Endothelial cell of umbilical vein (primary cell): ENCODE measurements at regions of chr6 and their contacts with region 1.

Region 1: GRCh38 chr6:133055441-133055966 is 185.7 kb upstream of the EYA4 start:
- DNase-seq: no peak
- H3K4me3 ChIP-seq: no peak overlapping the region
- H3K27ac ChIP-seq: no peak overlapping the region
- H3K4me1 ChIP-seq: no peaks in the 10 kb centered on the region
- H3K27me3 ChIP-seq: no peaks in the 10 kb centered on the region
- CTCF ChIP-seq: no peak
- POLR2A ChIP-seq: no peak

Region 2: DNA sequence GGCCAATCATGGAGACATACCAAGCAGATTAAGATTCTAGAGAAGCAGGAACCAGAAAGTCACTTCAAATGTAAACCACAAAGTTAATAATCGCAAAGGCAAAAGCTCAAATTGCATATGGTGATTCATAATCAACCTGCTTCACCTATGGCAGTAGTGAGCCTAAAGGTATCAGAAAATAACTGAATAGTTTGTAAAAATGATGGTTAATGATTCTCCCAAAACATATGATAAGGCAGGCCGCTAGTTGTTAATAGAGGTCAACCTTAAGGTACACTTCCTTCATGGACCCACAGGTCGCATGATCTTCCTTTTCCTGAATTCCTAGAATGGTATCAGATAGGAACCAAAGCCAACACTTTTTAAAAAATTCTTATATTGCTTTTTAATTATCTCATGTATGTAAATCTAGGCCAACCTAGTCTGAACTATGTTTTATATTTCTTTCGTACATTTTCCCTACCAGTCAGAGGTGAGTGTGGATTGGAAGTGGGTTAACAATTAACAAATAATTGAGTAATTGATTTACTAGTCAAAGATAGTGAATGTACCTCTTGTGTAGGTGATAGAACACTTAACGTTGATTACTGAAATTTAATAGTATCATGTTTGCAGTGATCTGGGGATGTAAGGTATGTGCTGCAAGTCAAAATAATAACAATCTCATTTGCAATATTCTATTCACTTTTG is 447.8 kb before region 1 on chr6:
- CTCF ChIA-PET with region 1: no interaction called
- POLR2A ChIA-PET with region 1: no interaction called
- dilution Hi-C with region 1: no loop called
- intact Hi-C with region 1: no loop called
- DNase-seq: no peak
- H3K4me3 ChIP-seq: no peak overlapping the region
- H3K27ac ChIP-seq: no peak overlapping the region
- H3K4me1 ChIP-seq: no peaks in the 10 kb centered on the region
- H3K27me3 ChIP-seq: no peaks in the 10 kb centered on the region
- CTCF ChIP-seq: no peak
- POLR2A ChIP-seq: no peak

Region 3: GRCh38 chr6:134784336-134784735 is 1728.8 kb after region 1 on chr6:
- CTCF ChIA-PET with region 1: no interaction called
- POLR2A ChIA-PET with region 1: no interaction called
- dilution Hi-C with region 1: no loop called
- intact Hi-C with region 1: loop called (anchors 5 kb)
- DNase-seq: no peak
- H3K4me3 ChIP-seq: no peak overlapping the region
- H3K27ac ChIP-seq: no peak overlapping the region
- H3K4me1 ChIP-seq: peaks cover 3% of the 10 kb centered on the region
- H3K27me3 ChIP-seq: no peaks in the 10 kb centered on the region
- CTCF ChIP-seq: no peak
- POLR2A ChIP-seq: no peak